OCI-LY7 (cell line): ENCODE measurements at regions of chr17 and their contacts with region 1.

Region 1: GRCh38 chr17:44344939-44345453 is at the start of gene GRN:
- DNase-seq: peak; percentile 95
- H3K4me3 ChIP-seq: peak within 1 kb of the TSS; percentile 91
- H3K27ac ChIP-seq: peak within 1 kb of the TSS; percentile 90
- H3K4me1 ChIP-seq: peaks cover 52% of the 10 kb centered on the region
- CTCF ChIP-seq: no peak
- total RNA-seq, gene GRN: 185 and 203 TPM in 2 replicates

Region 2: GRCh38 chr17:44070455-44071197 is 274.4 kb before region 1 on chr17 and contains the start of gene G6PC3:
- CTCF ChIA-PET with region 1: no interaction called
- POLR2A ChIA-PET with region 1: no interaction called
- intact Hi-C with region 1: loop called (anchors 5 kb)
- DNase-seq: peak; percentile 89
- H3K4me3 ChIP-seq: peak within 1 kb of the TSS; percentile 76
- H3K27ac ChIP-seq: peak within 1 kb of the TSS; percentile 67
- H3K4me1 ChIP-seq: peaks cover 31% of the 10 kb centered on the region
- CTCF ChIP-seq: no peak
- total RNA-seq, gene G6PC3: 10.7 and 20.6 TPM in 2 replicates

Region 3: DNA sequence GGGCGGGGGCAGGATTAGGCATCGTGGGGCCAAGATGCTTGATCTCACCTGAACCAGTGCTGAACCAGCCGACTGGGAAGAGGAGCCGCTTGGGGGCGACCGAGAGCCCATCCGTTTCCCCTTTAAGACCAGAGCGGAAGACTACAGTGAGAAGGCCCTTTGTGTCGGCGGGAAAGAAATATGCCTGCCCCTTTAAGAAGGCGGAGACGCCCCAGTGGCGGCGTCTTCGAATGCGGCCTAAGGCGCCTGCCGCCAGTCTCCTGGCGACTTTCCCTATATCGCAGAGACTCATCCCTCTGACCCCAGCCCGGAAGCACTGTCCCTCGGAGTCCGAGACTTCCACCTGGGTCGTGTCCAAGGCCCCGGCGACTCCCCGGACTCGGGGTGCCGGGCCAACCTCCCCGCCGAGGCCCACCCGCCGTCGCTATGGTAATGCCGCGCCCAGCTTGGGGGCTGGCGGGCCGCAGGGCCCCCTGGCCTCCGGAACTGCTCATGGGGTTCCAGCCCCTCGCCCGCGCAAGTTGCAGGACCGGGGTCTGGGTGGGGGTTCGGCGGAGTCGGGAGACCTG is 203.2 kb before region 1 on chr17 and contains the start of gene HROB:
- CTCF ChIA-PET with region 1: no interaction called
- POLR2A ChIA-PET with region 1: interaction called, 3 read pairs
- intact Hi-C with region 1: loop called (anchors 5 kb)
- DNase-seq: peak; percentile 97
- H3K4me3 ChIP-seq: peak within 1 kb of the TSS; percentile 90
- H3K27ac ChIP-seq: peak within 1 kb of the TSS; percentile 63
- H3K4me1 ChIP-seq: peaks cover 27% of the 10 kb centered on the region
- CTCF ChIP-seq: peak; percentile 84
- total RNA-seq, gene HROB: 10.9 and 13.3 TPM in 2 replicates

Region 4: GRCh38 chr17:44199553-44200477 is 145.2 kb before region 1 on chr17 and contains the start of gene ATXN7L3:
- CTCF ChIA-PET with region 1: no interaction called
- POLR2A ChIA-PET with region 1: no interaction called
- intact Hi-C with region 1: loop called (anchors 1 kb)
- DNase-seq: peak; percentile 99
- H3K4me3 ChIP-seq: peak within 1 kb of the TSS; percentile 85
- H3K27ac ChIP-seq: peak within 1 kb of the TSS; percentile 96
- H3K4me1 ChIP-seq: peaks cover 52% of the 10 kb centered on the region
- CTCF ChIP-seq: no peak
- total RNA-seq, gene ATXN7L3: 57.7 and 66.5 TPM in 2 replicates

Region 5: DNA sequence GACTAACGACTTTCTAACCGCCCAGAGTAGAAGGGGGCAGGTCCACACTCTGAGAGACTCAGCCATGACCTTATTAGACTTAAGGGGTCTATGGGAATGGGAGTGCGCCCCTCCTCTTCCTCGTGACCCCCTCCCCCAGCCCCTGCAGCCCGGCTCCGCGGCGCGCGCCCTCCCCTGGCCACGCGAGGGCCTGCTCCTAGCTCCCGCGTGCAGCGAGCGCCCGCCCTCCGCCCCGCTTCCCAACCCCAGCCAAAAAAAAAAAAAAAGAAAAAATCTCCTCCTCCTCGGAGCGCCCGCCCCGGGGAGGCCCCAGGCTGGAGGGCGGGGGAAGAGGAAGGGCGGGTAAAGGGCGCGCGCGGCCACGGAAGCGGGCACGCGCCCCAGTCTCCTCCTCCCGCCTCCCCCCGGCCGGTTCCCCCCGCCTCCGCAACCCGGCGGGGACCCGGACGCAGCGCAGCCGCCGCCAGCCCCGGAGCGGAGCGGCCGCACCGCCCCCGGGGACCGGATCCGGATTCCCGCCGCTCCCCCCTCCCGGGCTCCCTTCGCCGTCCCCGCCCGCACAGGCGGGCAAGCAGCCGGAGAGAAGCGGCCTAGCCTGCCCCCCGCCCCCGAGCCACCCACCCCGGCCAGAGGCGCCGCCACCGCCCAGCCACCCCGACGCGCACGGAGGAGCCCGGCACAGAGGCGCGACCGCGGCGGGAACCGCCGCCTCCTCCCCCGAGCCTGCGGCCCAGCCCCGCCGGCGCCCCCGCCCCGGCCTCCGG is 126.5 kb before region 1 on chr17:
- CTCF ChIA-PET with region 1: interaction called, 7 read pairs
- POLR2A ChIA-PET with region 1: interaction called, 3 read pairs
- intact Hi-C with region 1: loop called (anchors 1 kb)
- DNase-seq: peak; percentile 94
- H3K4me3 ChIP-seq: peak overlapping the region; percentile 90
- H3K27ac ChIP-seq: peak overlapping the region; percentile 86
- H3K4me1 ChIP-seq: peaks cover 36% of the 10 kb centered on the region
- CTCF ChIP-seq: peak; percentile 80

Region 6: GRCh38 chr17:44247440-44247841 is 97.6 kb before region 1 on chr17:
- CTCF ChIA-PET with region 1: no interaction called
- POLR2A ChIA-PET with region 1: interaction called, 10 read pairs
- intact Hi-C with region 1: no loop called
- DNase-seq: no peak
- H3K4me3 ChIP-seq: no peak overlapping the region
- H3K27ac ChIP-seq: peak overlapping the region; percentile 53
- H3K4me1 ChIP-seq: peaks cover 45% of the 10 kb centered on the region
- CTCF ChIP-seq: no peak

Region 7: GRCh38 chr17:44266402-44267164 is 78.4 kb before region 1 on chr17:
- CTCF ChIA-PET with region 1: no interaction called
- POLR2A ChIA-PET with region 1: no interaction called
- intact Hi-C with region 1: no loop called
- DNase-seq: no peak
- H3K4me3 ChIP-seq: no peak overlapping the region
- H3K27ac ChIP-seq: no peak overlapping the region
- H3K4me1 ChIP-seq: no peaks in the 10 kb centered on the region
- CTCF ChIP-seq: peak; percentile 42; the same call in 1 of the 2 replicates

Region 8: GRCh38 chr17:44308320-44308818 is 36.6 kb before region 1 on chr17 and contains the start of gene RUNDC3A:
- CTCF ChIA-PET with region 1: no interaction called
- POLR2A ChIA-PET with region 1: no interaction called
- intact Hi-C with region 1: no loop called
- DNase-seq: peak; percentile 81
- H3K4me3 ChIP-seq: peak within 1 kb of the TSS; percentile 58
- H3K27ac ChIP-seq: no peak within 1 kb of the TSS
- H3K4me1 ChIP-seq: peaks cover 19% of the 10 kb centered on the region
- CTCF ChIP-seq: no peak
- total RNA-seq, gene RUNDC3A: 0.09 TPM in 1 of 2 replicates, not detected in the other

Region 9: DNA sequence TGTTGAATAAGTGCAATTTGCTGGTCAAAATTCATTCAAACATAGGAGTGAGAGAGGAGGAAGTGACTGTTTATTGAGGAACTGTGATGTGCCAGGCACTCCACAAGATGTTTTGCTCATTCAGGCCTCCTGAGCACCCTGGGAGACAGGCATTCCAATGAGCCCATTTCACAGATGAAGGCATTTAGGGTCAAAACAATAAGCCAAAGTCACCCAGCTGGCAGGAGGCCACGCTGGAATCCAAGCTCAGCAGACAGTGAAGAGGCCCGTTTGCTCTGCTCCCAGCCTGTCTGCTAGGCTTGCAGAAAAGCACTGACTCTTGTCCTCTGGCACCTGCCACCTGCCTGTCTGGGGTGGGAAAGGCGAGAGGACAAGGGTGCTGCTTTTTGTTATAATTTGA is 10.3 kb before region 1 on chr17:
- CTCF ChIA-PET with region 1: interaction called, 8 read pairs
- POLR2A ChIA-PET with region 1: interaction called, 11 read pairs
- intact Hi-C with region 1: no loop called
- DNase-seq: peak; percentile 59
- H3K4me3 ChIP-seq: no peak overlapping the region
- H3K27ac ChIP-seq: peak overlapping the region; percentile 49
- H3K4me1 ChIP-seq: peaks cover 38% of the 10 kb centered on the region
- CTCF ChIP-seq: 0 out of 2 replicates have a peak, but pooled peaks have one; percentile 19

Region 10: GRCh38 chr17:44385287-44386181 is 40.5 kb after region 1 on chr17:
- CTCF ChIA-PET with region 1: no interaction called
- POLR2A ChIA-PET with region 1: no interaction called
- intact Hi-C with region 1: no loop called
- DNase-seq: peak; percentile 47
- H3K4me3 ChIP-seq: peak overlapping the region; percentile 62
- H3K27ac ChIP-seq: no peak overlapping the region
- H3K4me1 ChIP-seq: peaks cover 7% of the 10 kb centered on the region
- CTCF ChIP-seq: 0 out of 2 replicates have a peak, but pooled peaks have one; percentile 13